ENCODE measurements at regions of chr6 and their contacts with region 1.

Region 1: DNA sequence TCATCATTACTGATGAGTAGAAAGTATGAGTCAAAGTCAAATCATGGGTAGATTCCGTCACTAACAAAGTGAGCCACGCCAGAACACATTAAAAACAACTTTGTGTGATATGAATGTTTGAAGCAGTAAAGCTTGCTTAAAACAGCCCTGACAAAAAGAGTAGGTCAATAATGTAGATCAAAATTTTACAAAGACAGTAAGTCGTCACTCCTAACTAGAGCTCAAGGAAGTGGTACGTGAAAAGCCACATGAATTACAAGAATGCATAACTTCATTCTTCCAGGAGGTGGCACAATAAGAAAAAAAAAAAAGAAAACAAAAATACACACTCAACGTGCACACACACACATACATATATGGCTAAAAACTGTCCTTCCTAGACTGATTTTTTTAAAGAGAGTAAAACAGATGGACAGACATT is 69.9 kb downstream of the HACE1 start:
- DNase-seq: peak; percentile 48
- H3K4me3 ChIP-seq: no peak overlapping the region
- H3K27ac ChIP-seq: no peak overlapping the region
- H3K4me1 ChIP-seq: no peaks in the 10 kb centered on the region
- CTCF ChIP-seq: peak; percentile 85

Region 2: GRCh38 chr6:104459543-104459942 is 330.2 kb before region 1 on chr6:
- CTCF ChIA-PET with region 1: no interaction called
- POLR2A ChIA-PET with region 1: no interaction called
- intact Hi-C with region 1: no loop called
- DNase-seq: no peak
- H3K4me3 ChIP-seq: no peak overlapping the region
- H3K27ac ChIP-seq: no peak overlapping the region
- H3K4me1 ChIP-seq: no peaks in the 10 kb centered on the region
- CTCF ChIP-seq: no peak

Region 3: GRCh38 chr6:104843200-104843599 is 53.4 kb after region 1 on chr6:
- CTCF ChIA-PET with region 1: no interaction called
- POLR2A ChIA-PET with region 1: no interaction called
- intact Hi-C with region 1: no loop called
- DNase-seq: no peak
- H3K4me3 ChIP-seq: no peak overlapping the region
- H3K27ac ChIP-seq: no peak overlapping the region
- H3K4me1 ChIP-seq: no peaks in the 10 kb centered on the region
- CTCF ChIP-seq: no peak

Region 4: DNA sequence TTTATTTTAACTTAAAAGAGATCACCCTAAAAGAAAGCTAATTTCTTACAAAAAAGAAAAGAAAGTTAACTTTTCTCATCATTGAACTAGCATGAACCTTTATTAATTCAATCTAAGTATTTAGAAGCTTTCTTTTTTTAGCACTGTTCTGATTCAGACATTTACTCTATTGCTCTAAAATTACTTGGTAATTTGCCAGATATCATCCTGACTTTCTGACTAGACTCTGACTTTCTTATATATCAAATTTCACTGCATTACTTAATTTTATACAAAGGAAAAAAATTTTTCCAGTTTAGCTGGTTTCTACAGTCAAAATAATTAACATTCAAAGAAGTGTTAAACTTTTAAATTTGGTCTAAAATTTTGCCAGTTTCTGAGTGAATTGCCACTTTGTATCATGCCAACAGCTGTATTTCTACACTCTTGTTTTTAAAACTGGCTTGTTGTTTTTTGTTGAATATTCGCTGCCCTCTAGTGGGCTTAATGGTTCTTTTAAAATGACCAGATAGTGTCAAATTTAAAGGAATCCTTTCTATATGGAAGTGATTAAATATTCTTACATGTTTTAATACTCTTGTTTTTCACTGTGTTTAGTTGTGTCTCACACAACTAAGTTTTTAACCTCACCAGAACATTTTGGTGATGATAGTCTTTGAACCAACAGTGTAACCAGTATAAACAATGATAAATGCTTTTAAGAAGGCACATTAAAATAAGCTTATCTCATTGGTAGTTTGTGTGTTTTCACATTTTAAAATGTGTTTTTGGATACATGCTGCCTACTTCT is 288.0 kb after region 1 on chr6:
- CTCF ChIA-PET with region 1: interaction called, 4 read pairs
- POLR2A ChIA-PET with region 1: interaction called, 8 read pairs
- intact Hi-C with region 1: loop called (anchors 5 kb)
- DNase-seq: peak; percentile 35
- H3K4me3 ChIP-seq: no peak overlapping the region
- H3K27ac ChIP-seq: no peak overlapping the region
- H3K4me1 ChIP-seq: no peaks in the 10 kb centered on the region
- CTCF ChIP-seq: peak; percentile 84

Region 5: GRCh38 chr6:105317607-105318533 is 528.1 kb after region 1 on chr6:
- CTCF ChIA-PET with region 1: no interaction called
- POLR2A ChIA-PET with region 1: no interaction called
- intact Hi-C with region 1: no loop called
- DNase-seq: peak; percentile 22
- H3K4me3 ChIP-seq: no peak overlapping the region
- H3K27ac ChIP-seq: no peak overlapping the region
- H3K4me1 ChIP-seq: no peaks in the 10 kb centered on the region
- CTCF ChIP-seq: peak; percentile 69